ENCODE measurements at regions of chr9 and their contacts with region 1.

Region 1: DNA sequence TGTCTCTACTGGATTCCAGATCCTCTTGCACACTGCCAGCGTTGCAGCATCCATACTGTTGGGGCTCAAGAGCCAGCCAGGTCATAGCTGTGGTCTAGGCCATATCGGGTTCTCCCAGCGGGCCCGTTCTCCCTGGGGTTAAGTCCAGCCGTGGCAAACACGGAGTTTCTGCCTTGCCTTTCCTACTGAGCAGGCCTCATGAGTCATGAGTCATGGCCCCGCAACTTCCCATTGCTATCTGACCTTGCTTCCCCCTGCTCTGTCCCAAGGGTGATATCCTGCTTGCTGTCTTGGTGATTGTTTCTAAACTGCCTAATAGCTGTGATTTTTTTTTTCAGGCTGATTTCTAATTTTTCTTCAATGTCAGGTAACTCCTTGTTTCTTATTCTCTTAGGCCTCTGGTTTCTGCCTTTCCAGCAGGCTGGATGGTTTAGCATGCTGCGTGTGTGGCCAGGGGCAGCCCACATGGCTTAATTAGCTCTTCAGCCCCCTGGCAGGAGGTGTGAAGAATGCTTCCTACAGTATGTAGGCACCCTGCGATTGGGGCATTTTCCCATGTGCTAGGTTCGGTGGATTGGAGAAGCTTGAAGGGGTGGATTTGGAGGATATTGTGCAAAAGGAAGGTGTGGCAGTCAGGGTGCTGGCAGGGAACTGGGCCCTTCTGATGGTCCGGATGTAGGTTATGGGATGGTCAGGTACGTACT is 18.7 kb downstream of the DAPK1 start:
- DNase-seq: no peak
- H3K4me3 ChIP-seq: no peak overlapping the region
- CTCF ChIP-seq: no peak

Region 2: GRCh38 chr9:87662808-87663528 is 146.6 kb after region 1 on chr9:
- in situ Hi-C with region 1: loop called (anchors 5 kb)
- DNase-seq: peak; percentile 78
- H3K4me3 ChIP-seq: no peak overlapping the region
- CTCF ChIP-seq: peak; percentile 92

Measured in astrocyte of the cerebellum (primary cell).